ENCODE measurements at regions of chr12 and their contacts with region 1.

Region 1: DNA sequence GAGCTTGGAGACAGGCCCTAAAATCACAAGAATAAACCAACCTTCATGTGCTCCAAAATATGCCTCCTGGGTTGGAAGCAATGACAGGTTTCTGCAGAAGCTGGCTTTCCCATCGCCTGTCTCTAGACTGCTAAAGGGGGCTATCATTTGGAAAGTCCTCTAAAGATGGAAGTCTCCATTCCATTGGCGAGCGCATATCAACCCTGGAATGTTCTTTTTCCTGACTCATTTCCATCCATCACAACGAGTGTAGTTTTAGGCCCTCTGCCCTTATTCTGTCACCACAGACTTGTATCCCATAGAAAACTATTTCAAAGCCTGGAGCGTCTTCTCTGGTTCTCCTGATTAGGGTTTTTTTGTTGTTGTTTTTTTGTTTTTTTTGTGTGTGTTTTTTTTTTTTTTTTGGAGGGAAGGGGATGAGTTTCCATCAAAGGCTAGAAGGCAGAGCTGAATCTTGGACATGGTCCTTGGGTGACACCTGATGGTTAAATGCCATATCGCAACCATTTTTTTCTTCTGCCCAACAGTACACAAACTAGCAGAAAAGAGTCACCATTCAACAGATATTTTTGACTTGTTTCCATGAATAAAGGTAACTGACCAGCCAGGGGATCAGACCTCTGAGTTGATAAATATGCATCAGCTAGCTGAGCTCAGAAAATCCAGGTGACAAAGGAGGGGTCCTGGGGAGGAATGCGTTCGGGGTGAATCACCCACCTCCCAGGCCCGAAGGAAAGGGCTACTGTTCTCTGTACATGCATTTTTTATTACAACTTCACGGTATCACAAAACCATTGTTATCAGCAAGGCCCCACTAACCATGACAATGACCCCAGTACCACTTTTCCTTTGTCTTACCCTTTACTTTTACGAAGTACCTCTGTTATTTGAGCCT is 40.5 kb downstream of the KCNA5 start:
- DNase-seq: peak; percentile 56
- H3K27ac ChIP-seq: no peak overlapping the region
- CTCF ChIP-seq: peak; percentile 51

Region 2: GRCh38 chr12:4857472-4858291 is 226.5 kb before region 1 on chr12:
- CTCF ChIA-PET with region 1: interaction called, 13 read pairs
- POLR2A ChIA-PET with region 1: no interaction called
- DNase-seq: peak; percentile 62
- H3K27ac ChIP-seq: no peak overlapping the region
- CTCF ChIP-seq: peak; percentile 74

Region 3: GRCh38 chr12:5022465-5023061 is 61.6 kb before region 1 on chr12:
- CTCF ChIA-PET with region 1: interaction called, 18 read pairs
- POLR2A ChIA-PET with region 1: no interaction called
- DNase-seq: peak; percentile 53
- H3K27ac ChIP-seq: no peak overlapping the region
- CTCF ChIP-seq: peak; percentile 67